WTC11 (cell line): ENCODE measurements at regions of chr4 and their contacts with region 1.

Region 1: GRCh38 chr4:123209436-123209835 is 187.2 kb upstream of the SPRY1 start:
- DNase-seq: no peak
- ATAC-seq: no peak
- H3K4me3 Mint-ChIP-seq: no peak overlapping the region
- H3K27ac Mint-ChIP-seq: no peak overlapping the region
- H3K4me1 Mint-ChIP-seq: peaks cover 11% of the 10 kb centered on the region; the same call in 1 of the 2 replicates
- H3K27me3 Mint-ChIP-seq: no peaks in the 10 kb centered on the region
- CTCF ChIP-seq: no peak

Region 2: GRCh38 chr4:122854447-122855352 is 354.7 kb before region 1 on chr4:
- CTCF ChIA-PET with region 1: no interaction called
- POLR2A ChIA-PET with region 1: no interaction called
- DNase-seq: no peak
- ATAC-seq: peak; percentile 22
- H3K4me3 Mint-ChIP-seq: peak overlapping the region; percentile 29
- H3K27ac Mint-ChIP-seq: peak overlapping the region; percentile 91
- H3K4me1 Mint-ChIP-seq: peaks cover 88% of the 10 kb centered on the region
- H3K27me3 Mint-ChIP-seq: no peaks in the 10 kb centered on the region
- CTCF ChIP-seq: no peak

Region 3: GRCh38 chr4:123193802-123194367 is 15.6 kb before region 1 on chr4:
- CTCF ChIA-PET with region 1: no interaction called
- POLR2A ChIA-PET with region 1: interaction called, 10 read pairs
- DNase-seq: no peak
- ATAC-seq: no peak
- H3K4me3 Mint-ChIP-seq: no peak overlapping the region
- H3K27ac Mint-ChIP-seq: no peak overlapping the region
- H3K4me1 Mint-ChIP-seq: no peaks in the 10 kb centered on the region
- H3K27me3 Mint-ChIP-seq: no peaks in the 10 kb centered on the region
- CTCF ChIP-seq: no peak

Region 4: GRCh38 chr4:123390846-123391456 is 181.5 kb after region 1 on chr4:
- CTCF ChIA-PET with region 1: no interaction called
- POLR2A ChIA-PET with region 1: no interaction called
- DNase-seq: no peak
- ATAC-seq: no peak
- H3K4me3 Mint-ChIP-seq: no peak overlapping the region
- H3K27ac Mint-ChIP-seq: no peak overlapping the region
- H3K4me1 Mint-ChIP-seq: peaks cover 18% of the 10 kb centered on the region
- H3K27me3 Mint-ChIP-seq: no peaks in the 10 kb centered on the region
- CTCF ChIP-seq: no peak